ENCODE measurements at regions of chr2 and their contacts with region 1.

Region 1: GRCh38 chr2:171260471-171261424 is 100.1 kb upstream of the TLK1 start:
- DNase-seq: peak; percentile 55
- ATAC-seq: peak; percentile 81
- H3K4me3 ChIP-seq: no peak overlapping the region
- H3K27ac ChIP-seq: peak overlapping the region; percentile 73
- H3K4me1 ChIP-seq: peaks cover 20% of the 10 kb centered on the region
- H3K27me3 ChIP-seq: no peaks in the 10 kb centered on the region
- CTCF ChIP-seq: peak in 2 of 3 experiments; percentile 17 to 20; a peak in 3 of 6 replicates
- EP300 ChIP-seq: no peak
- POLR2A ChIP-seq: no peak
- RAD21 ChIP-seq: peak; percentile 60

Region 2: GRCh38 chr2:171102802-171103201 is 157.9 kb before region 1 on chr2:
- CTCF ChIA-PET with region 1: no interaction called
- POLR2A ChIA-PET with region 1: no interaction called
- RAD21 ChIA-PET with region 1: no interaction called
- SMC1A ChIA-PET with region 1: no interaction called
- in situ Hi-C with region 1: no loop called
- intact Hi-C with region 1: no loop called
- DNase-seq: no peak
- ATAC-seq: no peak
- H3K4me3 ChIP-seq: no peak overlapping the region
- H3K27ac ChIP-seq: no peak overlapping the region
- H3K4me1 ChIP-seq: no peaks in the 10 kb centered on the region
- H3K27me3 ChIP-seq: no peaks in the 10 kb centered on the region
- CTCF ChIP-seq: no peak
- EP300 ChIP-seq: no peak
- POLR2A ChIP-seq: no peak
- RAD21 ChIP-seq: no peak

Region 3: GRCh38 chr2:171210864-171211431 is 49.8 kb before region 1 on chr2:
- CTCF ChIA-PET with region 1: no interaction called
- POLR2A ChIA-PET with region 1: no interaction called
- RAD21 ChIA-PET with region 1: interaction called, 4 read pairs
- SMC1A ChIA-PET with region 1: interaction called, 16 read pairs
- in situ Hi-C with region 1: no loop called
- intact Hi-C with region 1: no loop called
- DNase-seq: peak; percentile 58
- ATAC-seq: peak; percentile 93
- H3K4me3 ChIP-seq: peak overlapping the region; percentile 37; the same call in 1 of the 2 replicates
- H3K27ac ChIP-seq: peak overlapping the region; percentile 88
- H3K4me1 ChIP-seq: peaks cover 11% of the 10 kb centered on the region
- H3K27me3 ChIP-seq: no peaks in the 10 kb centered on the region
- CTCF ChIP-seq: no peak
- EP300 ChIP-seq: peak in 1 of 2 experiments; percentile 55; a peak in 2 of 4 replicates
- POLR2A ChIP-seq: 0 out of 2 replicates have a peak, but pooled peaks have one; percentile 41
- RAD21 ChIP-seq: no peak

Region 4: DNA sequence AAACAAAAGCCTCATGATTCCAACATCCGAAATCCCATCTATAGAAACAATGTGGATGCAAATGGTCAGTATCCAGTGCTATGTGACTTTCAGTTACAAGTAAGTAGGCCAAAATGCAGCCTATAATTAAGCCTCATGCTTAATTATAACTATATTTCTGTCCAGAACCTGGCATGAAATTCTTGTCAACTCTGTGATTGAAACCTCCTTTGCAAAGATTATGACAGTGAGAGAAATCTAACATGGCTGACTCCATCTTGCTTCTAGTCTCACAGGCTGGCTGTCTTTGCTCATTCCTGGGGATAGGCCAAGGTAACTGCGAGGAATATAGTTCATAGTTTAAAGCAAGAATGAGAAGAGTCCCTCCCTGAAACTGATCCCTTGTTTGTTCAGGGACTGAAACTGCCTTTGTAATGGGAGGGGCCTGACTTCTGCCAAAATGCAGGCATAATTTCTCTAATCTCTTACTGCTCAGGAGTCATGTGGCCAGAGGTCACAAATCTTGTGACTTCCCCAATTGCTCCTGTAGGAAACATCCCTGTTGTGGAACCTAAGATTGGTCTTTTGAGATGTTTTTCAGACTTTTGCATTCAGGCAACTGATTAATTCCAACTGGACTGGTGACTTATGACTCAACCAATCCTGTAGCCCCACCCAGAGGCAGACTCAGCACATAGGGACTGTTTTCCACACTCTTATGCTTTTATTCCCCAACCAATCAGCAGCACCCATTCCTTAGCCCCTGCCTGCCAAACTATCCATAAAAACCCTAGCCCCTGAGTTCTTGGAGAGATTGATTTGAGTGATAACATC is 15.6 kb before region 1 on chr2:
- CTCF ChIA-PET with region 1: interaction called, 4 read pairs
- POLR2A ChIA-PET with region 1: interaction called, 5 read pairs
- RAD21 ChIA-PET with region 1: interaction called, 3 read pairs
- SMC1A ChIA-PET with region 1: interaction called, 11 read pairs
- in situ Hi-C with region 1: no loop called
- intact Hi-C with region 1: no loop called
- DNase-seq: no peak
- ATAC-seq: no peak
- H3K4me3 ChIP-seq: no peak overlapping the region
- H3K27ac ChIP-seq: no peak overlapping the region
- H3K4me1 ChIP-seq: peaks cover 24% of the 10 kb centered on the region
- H3K27me3 ChIP-seq: no peaks in the 10 kb centered on the region
- CTCF ChIP-seq: no peak
- EP300 ChIP-seq: no peak
- POLR2A ChIP-seq: no peak
- RAD21 ChIP-seq: no peak; the same call in 1 of the 2 replicates

Region 5: GRCh38 chr2:171972329-171972982 is 711.7 kb after region 1 on chr2:
- CTCF ChIA-PET with region 1: no interaction called
- POLR2A ChIA-PET with region 1: no interaction called
- RAD21 ChIA-PET with region 1: no interaction called
- SMC1A ChIA-PET with region 1: no interaction called
- in situ Hi-C with region 1: no loop called
- intact Hi-C with region 1: no loop called
- DNase-seq: no peak
- ATAC-seq: no peak
- H3K4me3 ChIP-seq: no peak overlapping the region
- H3K27ac ChIP-seq: no peak overlapping the region
- H3K4me1 ChIP-seq: no peaks in the 10 kb centered on the region
- H3K27me3 ChIP-seq: no peaks in the 10 kb centered on the region
- CTCF ChIP-seq: no peak
- EP300 ChIP-seq: no peak
- POLR2A ChIP-seq: no peak
- RAD21 ChIP-seq: no peak